GM12878 (cell line): ENCODE measurements at regions of chr17 and their contacts with region 1.

Region 1: GRCh38 chr17:3913531-3914311 is 2.5 kb downstream of the P2RX1 start:
- DNase-seq: peak; percentile 56
- ATAC-seq: peak; percentile 73
- H3K4me3 ChIP-seq: peak overlapping the region; percentile 52
- H3K27ac ChIP-seq: peak overlapping the region; percentile 86
- H3K4me1 ChIP-seq: peaks cover 54% of the 10 kb centered on the region
- H3K27me3 ChIP-seq: no peaks in the 10 kb centered on the region
- CTCF ChIP-seq: peak; percentile 98 to 99 (median 99); a peak in 5 of 6 replicates
- EP300 ChIP-seq: no peak; a peak in 1 of 4 replicates
- POLR2A ChIP-seq: no peak
- RAD21 ChIP-seq: peak; percentile 88

Region 2: GRCh38 chr17:3827124-3827773 is 86.5 kb before region 1 on chr17:
- CTCF ChIA-PET with region 1: no interaction called
- POLR2A ChIA-PET with region 1: no interaction called
- RAD21 ChIA-PET with region 1: no interaction called
- SMC1A ChIA-PET with region 1: no interaction called
- in situ Hi-C with region 1: no loop called
- intact Hi-C with region 1: no loop called
- DNase-seq: no peak
- ATAC-seq: peak; percentile 65
- H3K4me3 ChIP-seq: no peak overlapping the region
- H3K27ac ChIP-seq: no peak overlapping the region
- H3K4me1 ChIP-seq: no peaks in the 10 kb centered on the region
- H3K27me3 ChIP-seq: no peaks in the 10 kb centered on the region
- CTCF ChIP-seq: peak; percentile 82 to 85 (median 82)
- EP300 ChIP-seq: no peak
- POLR2A ChIP-seq: no peak
- RAD21 ChIP-seq: peak; percentile 90

Region 3: GRCh38 chr17:3865176-3865575 is 48.5 kb before region 1 on chr17:
- CTCF ChIA-PET with region 1: interaction called, 29 read pairs
- POLR2A ChIA-PET with region 1: no interaction called
- RAD21 ChIA-PET with region 1: interaction called, 14 read pairs
- SMC1A ChIA-PET with region 1: interaction called, 6 read pairs
- in situ Hi-C with region 1: no loop called
- intact Hi-C with region 1: loop called (anchors 2 kb)
- DNase-seq: no peak
- ATAC-seq: no peak
- H3K4me3 ChIP-seq: no peak overlapping the region
- H3K27ac ChIP-seq: no peak overlapping the region
- H3K4me1 ChIP-seq: no peaks in the 10 kb centered on the region
- H3K27me3 ChIP-seq: no peaks in the 10 kb centered on the region
- CTCF ChIP-seq: no peak
- EP300 ChIP-seq: no peak
- POLR2A ChIP-seq: no peak
- RAD21 ChIP-seq: no peak

Region 4: DNA sequence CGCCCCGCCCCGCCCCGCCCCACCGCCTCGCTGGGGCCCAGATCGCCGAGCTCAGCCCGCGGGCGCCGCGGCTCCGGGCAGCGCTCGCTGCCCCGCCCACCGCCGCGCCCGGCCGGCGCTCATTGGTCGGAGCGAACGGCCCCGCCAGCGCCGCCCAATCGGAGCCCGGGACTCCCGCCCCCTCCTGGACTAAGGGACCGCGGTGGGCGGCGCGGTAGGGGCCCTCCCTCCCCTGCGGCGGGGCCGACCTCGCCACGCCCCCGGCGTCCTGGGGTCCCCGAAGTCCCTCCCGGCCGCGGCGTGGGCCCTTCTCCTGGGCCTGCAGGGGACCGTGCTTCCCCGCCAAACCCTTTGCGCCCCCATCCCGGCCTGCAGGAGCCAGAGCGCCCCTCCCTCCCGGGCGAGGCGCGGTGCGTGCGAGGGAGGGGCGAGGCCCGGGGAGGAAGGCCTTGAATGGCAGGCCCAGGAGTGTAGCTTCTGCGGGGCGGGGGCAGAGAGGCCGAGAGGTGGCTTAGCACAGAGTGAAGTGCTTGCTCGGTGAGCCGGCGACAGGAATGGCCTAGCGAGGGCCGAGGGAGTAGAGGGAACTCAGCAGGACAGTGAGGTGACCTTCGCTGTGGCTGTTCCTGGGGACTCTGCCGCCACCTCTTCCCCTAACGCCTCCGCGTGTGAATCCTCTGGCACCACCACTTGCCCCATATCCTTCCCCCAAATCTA is 20.6 kb before region 1 on chr17 and contains the start of gene CAMKK1:
- CTCF ChIA-PET with region 1: interaction called, 15 read pairs
- POLR2A ChIA-PET with region 1: interaction called, 6 read pairs
- RAD21 ChIA-PET with region 1: interaction called, 6 read pairs
- SMC1A ChIA-PET with region 1: interaction called, 4 read pairs
- in situ Hi-C with region 1: no loop called
- intact Hi-C with region 1: no loop called
- DNase-seq: no peak
- ATAC-seq: peak; percentile 97
- H3K4me3 ChIP-seq: peak within 1 kb of the TSS; percentile 74; the same call in 1 of the 2 replicates
- H3K27ac ChIP-seq: peak within 1 kb of the TSS; percentile 55; the same call in 1 of the 2 replicates
- H3K4me1 ChIP-seq: peaks cover 3% of the 10 kb centered on the region
- H3K27me3 ChIP-seq: peaks cover 0 to 2% of the 10 kb centered on the region in 2 experiments; a peak in 1 of 4 replicates
- CTCF ChIP-seq: no peak
- EP300 ChIP-seq: 0 out of 4 replicates have a peak, but pooled peaks of 1 of the 2 experiments have one; percentile 14
- POLR2A ChIP-seq: peak; percentile 51
- RAD21 ChIP-seq: no peak
- polyA plus RNA-seq, gene CAMKK1: 0.06 to 0.09 TPM

Region 5: GRCh38 chr17:3935140-3935542 is 21.4 kb after region 1 on chr17:
- CTCF ChIA-PET with region 1: interaction called, 15 read pairs
- POLR2A ChIA-PET with region 1: no interaction called
- RAD21 ChIA-PET with region 1: interaction called, 4 read pairs
- SMC1A ChIA-PET with region 1: interaction called, 4 read pairs
- in situ Hi-C with region 1: no loop called
- intact Hi-C with region 1: no loop called
- DNase-seq: no peak
- ATAC-seq: peak; percentile 75
- H3K4me3 ChIP-seq: no peak overlapping the region
- H3K27ac ChIP-seq: no peak overlapping the region
- H3K4me1 ChIP-seq: no peaks in the 10 kb centered on the region
- H3K27me3 ChIP-seq: no peaks in the 10 kb centered on the region
- CTCF ChIP-seq: peak; percentile 43 to 46 (median 44); a peak in 4 of 6 replicates
- EP300 ChIP-seq: no peak
- POLR2A ChIP-seq: no peak
- RAD21 ChIP-seq: peak; percentile 59

Region 6: DNA sequence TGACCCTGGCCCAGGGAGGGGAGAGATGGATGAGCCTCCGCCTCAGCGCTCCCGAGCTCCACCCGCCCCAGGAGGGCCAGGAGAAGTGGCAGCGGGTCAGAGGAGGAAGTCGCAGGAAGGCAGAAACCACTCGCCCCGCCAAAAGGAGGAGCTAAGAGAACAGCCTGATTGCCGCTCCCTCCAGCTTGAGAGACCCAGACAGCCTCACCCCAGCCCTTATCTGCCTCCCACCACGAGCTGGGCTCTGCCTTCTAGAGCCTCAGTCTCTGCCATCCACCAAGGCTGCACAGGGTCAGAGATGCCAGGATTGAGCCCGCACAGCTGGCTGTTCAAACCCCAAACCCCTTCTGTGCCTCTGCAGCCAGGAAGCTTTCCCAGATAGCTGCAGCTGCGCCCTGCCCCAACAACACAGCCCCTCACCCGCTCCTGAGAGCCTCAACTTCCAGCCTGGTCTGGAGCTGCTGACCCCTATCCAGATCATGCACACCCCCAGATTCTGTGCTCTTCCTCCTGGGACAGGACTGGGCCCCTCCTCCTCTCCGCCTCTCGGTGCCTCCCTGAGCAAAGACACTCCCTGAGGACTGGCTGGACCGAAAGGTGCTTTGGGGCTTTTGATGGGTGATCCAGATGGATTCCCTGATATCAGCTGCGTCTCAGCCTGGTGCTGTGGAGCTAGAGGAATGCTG is 51.5 kb after region 1 on chr17:
- CTCF ChIA-PET with region 1: interaction called, 58 read pairs
- POLR2A ChIA-PET with region 1: interaction called, 18 read pairs
- RAD21 ChIA-PET with region 1: interaction called, 51 read pairs
- SMC1A ChIA-PET with region 1: interaction called, 20 read pairs
- in situ Hi-C with region 1: no loop called
- intact Hi-C with region 1: loop called (anchors 5 kb)
- DNase-seq: peak; percentile 33
- ATAC-seq: peak; percentile 79
- H3K4me3 ChIP-seq: peak overlapping the region; percentile 90
- H3K27ac ChIP-seq: peak overlapping the region; percentile 62
- H3K4me1 ChIP-seq: peaks cover 44% of the 10 kb centered on the region
- H3K27me3 ChIP-seq: no peaks in the 10 kb centered on the region
- CTCF ChIP-seq: peak in 1 of 3 experiments; percentile 50; a peak in 2 of 6 replicates
- EP300 ChIP-seq: no peak
- POLR2A ChIP-seq: peak; percentile 85
- RAD21 ChIP-seq: no peak

Region 7: GRCh38 chr17:4004517-4005295 is 91.0 kb after region 1 on chr17:
- CTCF ChIA-PET with region 1: interaction called, 99 read pairs
- POLR2A ChIA-PET with region 1: interaction called, 3 read pairs
- RAD21 ChIA-PET with region 1: interaction called, 25 read pairs
- SMC1A ChIA-PET with region 1: interaction called, 12 read pairs
- in situ Hi-C with region 1: loop called (anchors 5 kb)
- intact Hi-C with region 1: loop called (anchors 2 kb)
- DNase-seq: peak; percentile 5
- ATAC-seq: peak; percentile 90
- H3K4me3 ChIP-seq: no peak overlapping the region
- H3K27ac ChIP-seq: no peak overlapping the region
- H3K4me1 ChIP-seq: no peaks in the 10 kb centered on the region
- H3K27me3 ChIP-seq: no peaks in the 10 kb centered on the region
- CTCF ChIP-seq: peak; percentile 81 to 85 (median 83)
- EP300 ChIP-seq: no peak
- POLR2A ChIP-seq: 0 out of 2 replicates have a peak, but pooled peaks have one; percentile 34
- RAD21 ChIP-seq: peak; percentile 85

Region 8: DNA sequence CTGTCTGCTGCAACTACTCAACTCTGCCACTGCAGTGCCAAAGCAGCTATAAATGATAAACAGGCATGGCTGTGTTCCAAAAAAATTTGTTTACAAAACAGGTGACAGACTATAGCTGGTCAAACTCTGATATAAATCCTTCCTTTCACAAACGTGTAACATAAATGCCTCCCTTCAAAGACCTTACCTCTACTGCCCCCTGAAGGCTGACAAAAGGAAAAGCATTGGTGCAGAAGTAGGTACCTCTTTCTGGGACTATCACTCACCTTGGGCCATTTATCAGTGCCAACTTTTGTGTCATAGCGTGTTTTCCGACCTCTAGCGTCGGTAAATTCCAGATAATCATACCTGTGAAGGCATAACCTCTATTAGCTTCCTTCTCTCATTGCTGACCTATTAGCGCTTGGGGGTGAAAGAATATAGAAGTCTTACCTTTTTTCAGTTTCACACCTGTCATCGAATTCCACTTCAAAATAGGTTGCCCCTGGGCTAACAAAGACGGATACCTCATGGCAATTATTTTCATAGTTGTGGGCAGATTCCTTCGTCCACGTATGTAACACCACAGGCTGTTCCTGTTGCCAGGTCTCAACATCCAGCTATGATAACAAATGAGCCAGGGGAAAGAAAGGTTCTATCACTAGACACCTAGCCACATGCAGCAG is 161.2 kb after region 1 on chr17:
- CTCF ChIA-PET with region 1: interaction called, 119 read pairs
- POLR2A ChIA-PET with region 1: interaction called, 18 read pairs
- RAD21 ChIA-PET with region 1: interaction called, 70 read pairs
- SMC1A ChIA-PET with region 1: interaction called, 45 read pairs
- in situ Hi-C with region 1: no loop called
- intact Hi-C with region 1: loop called (anchors 2 kb)
- DNase-seq: peak; percentile 25
- ATAC-seq: peak; percentile 68
- H3K4me3 ChIP-seq: peak overlapping the region; percentile 24; the same call in 1 of the 2 replicates
- H3K27ac ChIP-seq: peak overlapping the region; percentile 77
- H3K4me1 ChIP-seq: peaks cover 33% of the 10 kb centered on the region
- H3K27me3 ChIP-seq: no peaks in the 10 kb centered on the region
- CTCF ChIP-seq: peak; percentile 77 to 82 (median 79)
- EP300 ChIP-seq: no peak
- POLR2A ChIP-seq: no peak
- RAD21 ChIP-seq: peak; percentile 79